ENCODE measurements at regions of chr17 and their contacts with region 1.

Region 1: DNA sequence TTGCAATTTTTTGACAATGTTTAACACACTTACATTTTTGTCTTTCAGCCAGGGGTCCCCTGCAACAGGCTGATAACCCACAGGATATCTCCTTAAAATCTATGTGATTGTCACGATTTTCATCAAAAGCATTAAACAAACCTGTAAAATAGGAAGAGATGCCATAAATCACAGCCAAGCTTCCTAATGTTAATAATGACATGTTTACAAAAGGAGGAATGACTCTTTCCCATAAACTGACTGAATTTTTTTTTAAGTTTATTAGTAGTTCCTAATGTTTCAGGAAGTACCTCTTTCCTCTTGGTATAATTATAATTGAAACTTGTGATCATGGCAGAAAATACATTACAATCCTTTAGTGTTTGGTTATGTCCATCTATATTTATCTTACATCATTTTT is 119.6 kb downstream of the CA4 start:
- DNase-seq: no peak
- ATAC-seq: no peak
- H3K4me3 ChIP-seq: no peak overlapping the region
- H3K27ac ChIP-seq: no peak overlapping the region
- H3K4me1 ChIP-seq: no peaks in the 10 kb centered on the region
- H3K27me3 ChIP-seq: no peaks in the 10 kb centered on the region
- CTCF ChIP-seq: no peak

Region 2: DNA sequence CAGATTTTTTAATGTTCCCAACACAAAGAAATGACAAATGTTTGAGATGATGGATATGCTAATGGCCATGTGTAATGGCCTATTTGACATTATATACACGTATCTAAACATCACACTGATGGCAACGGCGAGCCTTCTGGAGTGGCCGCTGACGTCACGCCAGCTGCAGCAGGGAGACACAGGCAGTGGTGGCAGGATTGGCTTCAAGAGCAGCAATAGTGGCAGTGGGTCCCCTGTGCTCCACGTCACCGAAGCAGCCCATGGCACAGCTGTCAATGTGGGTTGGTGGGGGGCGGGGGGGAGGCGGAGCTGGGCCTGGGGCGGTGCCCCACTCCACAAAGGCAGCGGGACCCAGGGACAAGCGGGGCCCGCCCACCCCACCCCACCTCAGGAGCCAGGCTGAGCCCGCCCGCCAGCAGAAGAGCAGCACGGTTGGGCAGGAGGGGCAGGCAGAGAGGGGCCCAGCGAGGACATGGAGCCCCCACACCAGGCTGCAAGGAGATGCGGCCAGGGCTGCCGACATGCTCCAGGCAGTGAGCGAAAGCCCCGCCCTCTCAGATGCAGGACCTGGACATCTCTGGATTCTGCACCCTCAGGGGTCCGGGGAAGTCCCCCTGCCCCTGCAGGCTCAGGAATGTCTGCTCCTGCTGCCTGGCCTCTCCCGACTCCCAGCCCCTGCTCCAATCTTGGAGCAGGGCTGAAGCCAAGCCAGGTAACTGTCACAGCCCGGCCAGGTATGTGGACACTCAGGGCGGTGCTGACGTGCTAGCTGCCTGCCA is 57.9 kb after region 1 on chr17:
- intact Hi-C with region 1: loop called in 1 of 10 experiments (anchors 10 kb)
- DNase-seq: no peak
- ATAC-seq: no peak
- H3K4me3 ChIP-seq: no peak overlapping the region
- H3K27ac ChIP-seq: no peak overlapping the region
- H3K4me1 ChIP-seq: no peaks in the 10 kb centered on the region
- H3K27me3 ChIP-seq: no peaks in the 10 kb centered on the region
- CTCF ChIP-seq: no peak